ENCODE measurements at regions of chr12 and their contacts with region 1.

Region 1: GRCh38 chr12:93397412-93397811 is 19.7 kb downstream of the NUDT4 start:
- DNase-seq: no peak
- H3K4me3 ChIP-seq: no peak overlapping the region
- H3K27ac ChIP-seq: no peak overlapping the region
- H3K4me1 ChIP-seq: no peaks in the 10 kb centered on the region
- H3K27me3 ChIP-seq: no peaks in the 10 kb centered on the region
- CTCF ChIP-seq: no peak
- POLR2A ChIP-seq: no peak

Region 2: GRCh38 chr12:92784795-92785562 is 612.4 kb before region 1 on chr12:
- CTCF ChIA-PET with region 1: interaction called, 14 read pairs
- POLR2A ChIA-PET with region 1: no interaction called
- dilution Hi-C with region 1: no loop called
- intact Hi-C with region 1: loop called (anchors 5 kb)
- DNase-seq: peak; percentile 90
- H3K4me3 ChIP-seq: no peak overlapping the region
- H3K27ac ChIP-seq: no peak overlapping the region
- H3K4me1 ChIP-seq: no peaks in the 10 kb centered on the region
- H3K27me3 ChIP-seq: no peaks in the 10 kb centered on the region
- CTCF ChIP-seq: peak; percentile 26 to 28
- POLR2A ChIP-seq: no peak

Region 3: GRCh38 chr12:93025145-93025805 is 372.1 kb before region 1 on chr12:
- CTCF ChIA-PET with region 1: no interaction called
- POLR2A ChIA-PET with region 1: no interaction called
- dilution Hi-C with region 1: loop called (anchors 25 kb)
- intact Hi-C with region 1: loop called (anchors 2 kb)
- DNase-seq: peak; percentile 79
- H3K4me3 ChIP-seq: no peak overlapping the region
- H3K27ac ChIP-seq: no peak overlapping the region
- H3K4me1 ChIP-seq: peaks cover 10% of the 10 kb centered on the region
- H3K27me3 ChIP-seq: no peaks in the 10 kb centered on the region
- CTCF ChIP-seq: peak; percentile 37 to 40
- POLR2A ChIP-seq: no peak

Region 4: DNA sequence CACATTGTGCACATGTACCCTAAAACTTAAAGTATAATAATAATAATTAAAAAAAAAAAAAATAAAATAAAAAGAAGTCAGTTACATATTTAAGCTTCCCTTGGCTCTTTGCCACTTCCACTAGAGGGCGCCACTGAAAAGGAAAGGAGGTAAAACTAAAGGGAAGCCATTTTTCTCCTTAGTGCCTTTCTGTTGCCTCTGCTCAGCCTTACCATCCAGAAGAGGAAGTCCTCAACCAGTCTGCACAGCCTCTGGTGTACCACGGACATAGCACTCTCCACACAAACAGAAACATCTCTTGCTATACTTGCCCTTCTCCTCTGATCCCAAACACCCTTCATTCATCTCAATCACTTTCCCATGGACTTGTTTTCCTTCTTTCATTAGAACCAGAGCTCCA is 299.3 kb before region 1 on chr12:
- CTCF ChIA-PET with region 1: no interaction called
- POLR2A ChIA-PET with region 1: no interaction called
- dilution Hi-C with region 1: no loop called
- intact Hi-C with region 1: loop called (anchors 5 kb)
- DNase-seq: peak; percentile 53
- H3K4me3 ChIP-seq: no peak overlapping the region
- H3K27ac ChIP-seq: no peak overlapping the region
- H3K4me1 ChIP-seq: no peaks in the 10 kb centered on the region
- H3K27me3 ChIP-seq: no peaks in the 10 kb centered on the region
- CTCF ChIP-seq: peak; percentile 21 to 22
- POLR2A ChIP-seq: no peak

Measured in endothelial cell of umbilical vein (primary cell).